ENCODE measurements at regions of chr6 and their contacts with region 1.

Region 1: GRCh38 chr6:53162602-53163001 is 14.0 kb upstream of the GCM1 start:
- DNase-seq: no peak
- H3K4me3 ChIP-seq: no peak overlapping the region
- H3K27ac ChIP-seq: no peak overlapping the region
- H3K4me1 ChIP-seq: no peaks in the 10 kb centered on the region
- H3K27me3 ChIP-seq: no peaks in the 10 kb centered on the region
- CTCF ChIP-seq: no peak
- EP300 ChIP-seq: no peak
- POLR2A ChIP-seq: no peak

Region 2: DNA sequence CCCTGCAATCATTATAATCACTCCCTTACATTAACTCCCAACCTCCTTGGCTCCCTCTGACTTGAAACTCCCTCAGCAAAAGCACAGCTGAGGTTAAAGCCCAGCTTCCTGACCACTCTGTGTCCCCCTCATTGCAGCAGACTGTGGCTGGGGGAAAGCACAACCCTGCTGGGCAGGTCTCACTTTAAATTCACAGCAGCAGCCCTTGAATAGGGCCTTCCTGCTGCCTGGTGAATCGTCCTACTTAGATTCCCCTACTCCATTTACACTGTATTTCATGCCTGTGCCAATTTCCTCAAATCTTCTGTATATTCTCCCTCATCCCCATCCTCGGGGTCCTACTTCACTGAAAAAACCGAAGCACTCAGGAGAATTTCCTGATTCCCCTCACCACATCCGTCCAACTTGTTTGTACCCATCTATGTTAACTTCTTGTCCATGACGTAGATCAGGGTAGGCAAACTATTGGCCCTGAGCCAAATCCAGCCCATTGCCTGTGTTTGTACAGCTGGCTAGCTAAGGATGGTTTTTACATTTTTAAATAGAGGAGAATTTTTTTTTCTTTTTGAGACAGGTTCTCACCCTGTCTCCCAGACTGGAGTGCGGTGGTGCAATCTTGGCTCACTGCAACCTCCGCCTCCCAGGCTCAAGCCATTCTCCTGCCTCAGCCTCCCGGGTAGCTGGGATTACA is 17.5 kb after region 1 on chr6:
- intact Hi-C with region 1: no loop called
- DNase-seq: peak in 2 of 5 donors; percentile 8 to 29
- H3K4me3 ChIP-seq: no peak overlapping the region
- H3K27ac ChIP-seq: no peak overlapping the region
- H3K4me1 ChIP-seq: no peaks in the 10 kb centered on the region
- H3K27me3 ChIP-seq: no peaks in the 10 kb centered on the region
- CTCF ChIP-seq: no peak
- EP300 ChIP-seq: no peak
- POLR2A ChIP-seq: no peak

Region 3: GRCh38 chr6:53417140-53417539 is 254.5 kb after region 1 on chr6:
- intact Hi-C with region 1: loop called in 1 of 4 experiments (anchors 5 kb)
- DNase-seq: no peak
- H3K4me3 ChIP-seq: no peak overlapping the region
- H3K27ac ChIP-seq: no peak overlapping the region
- H3K4me1 ChIP-seq: no peaks in the 10 kb centered on the region
- H3K27me3 ChIP-seq: no peaks in the 10 kb centered on the region
- CTCF ChIP-seq: no peak
- EP300 ChIP-seq: no peak
- POLR2A ChIP-seq: no peak